PC-9 (cell line): ENCODE measurements at regions of chr7 and their contacts with region 1.

Region 1: GRCh38 chr7:130010689-130011412 is 40.3 kb downstream of the ZC3HC1 start:
- DNase-seq: peak; percentile 83 to 94
- H3K4me3 ChIP-seq: peak overlapping the region; percentile 29; the same call in 1 of the 2 replicates
- H3K27ac ChIP-seq: peak overlapping the region; percentile 99
- H3K4me1 ChIP-seq: peaks cover 26% of the 10 kb centered on the region
- H3K27me3 ChIP-seq: no peaks in the 10 kb centered on the region
- CTCF ChIP-seq: peak; percentile 97

Region 2: GRCh38 chr7:129468087-129468486 is 542.8 kb before region 1 on chr7:
- CTCF ChIA-PET with region 1: no interaction called
- POLR2A ChIA-PET with region 1: no interaction called
- intact Hi-C with region 1: loop called (anchors 2 kb)
- DNase-seq: peak in 1 of 2 experiments; percentile 92
- H3K4me3 ChIP-seq: no peak overlapping the region
- H3K27ac ChIP-seq: peak overlapping the region; percentile 80
- H3K4me1 ChIP-seq: peaks cover 45% of the 10 kb centered on the region
- H3K27me3 ChIP-seq: no peaks in the 10 kb centered on the region
- CTCF ChIP-seq: no peak

Region 3: DNA sequence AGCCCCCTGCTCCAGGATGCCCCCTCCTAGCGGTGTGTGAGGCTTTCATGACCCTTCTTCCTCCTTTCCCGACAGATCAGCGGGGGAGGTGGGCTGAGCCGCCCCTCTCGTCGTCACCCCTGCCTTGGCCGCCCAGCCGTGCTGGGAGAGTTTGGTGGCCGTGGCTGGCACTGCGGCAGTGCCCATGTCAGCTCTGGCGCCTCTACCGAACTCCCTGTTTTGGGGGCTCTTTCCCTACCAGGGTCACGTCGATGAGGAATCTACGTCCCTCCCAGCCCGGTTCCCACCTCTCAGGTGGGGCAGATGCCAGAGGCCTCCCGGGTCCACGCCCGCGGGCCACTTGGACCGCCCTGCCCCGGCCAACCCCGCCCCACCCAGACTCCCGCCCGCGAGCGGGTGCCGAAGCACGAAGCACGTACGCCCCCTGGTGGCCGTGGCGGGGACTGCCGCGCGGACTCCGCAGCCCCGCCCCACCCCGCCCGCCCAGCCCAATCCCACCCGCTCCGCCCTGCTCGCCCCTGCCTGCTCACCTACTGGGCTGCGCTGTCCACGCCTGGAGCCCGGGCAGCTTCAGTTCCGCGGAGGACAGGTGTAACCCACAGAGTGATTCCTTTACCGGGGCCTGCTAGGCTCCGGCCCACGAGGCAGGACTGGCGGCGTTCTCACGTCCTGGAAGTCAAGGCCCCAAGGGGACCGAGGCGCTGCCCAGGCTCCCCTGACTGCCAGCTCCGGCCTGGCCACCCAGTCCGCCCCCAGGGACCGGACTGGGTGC is 185.2 kb before region 1 on chr7:
- CTCF ChIA-PET with region 1: interaction called, 8 read pairs
- POLR2A ChIA-PET with region 1: interaction called, 7 read pairs
- intact Hi-C with region 1: loop called (anchors 1 kb)
- DNase-seq: peak; percentile 70 to 95
- H3K4me3 ChIP-seq: peak overlapping the region; percentile 88
- H3K27ac ChIP-seq: peak overlapping the region; percentile 91
- H3K4me1 ChIP-seq: peaks cover 23% of the 10 kb centered on the region
- H3K27me3 ChIP-seq: no peaks in the 10 kb centered on the region
- CTCF ChIP-seq: peak; percentile 70

Region 4: DNA sequence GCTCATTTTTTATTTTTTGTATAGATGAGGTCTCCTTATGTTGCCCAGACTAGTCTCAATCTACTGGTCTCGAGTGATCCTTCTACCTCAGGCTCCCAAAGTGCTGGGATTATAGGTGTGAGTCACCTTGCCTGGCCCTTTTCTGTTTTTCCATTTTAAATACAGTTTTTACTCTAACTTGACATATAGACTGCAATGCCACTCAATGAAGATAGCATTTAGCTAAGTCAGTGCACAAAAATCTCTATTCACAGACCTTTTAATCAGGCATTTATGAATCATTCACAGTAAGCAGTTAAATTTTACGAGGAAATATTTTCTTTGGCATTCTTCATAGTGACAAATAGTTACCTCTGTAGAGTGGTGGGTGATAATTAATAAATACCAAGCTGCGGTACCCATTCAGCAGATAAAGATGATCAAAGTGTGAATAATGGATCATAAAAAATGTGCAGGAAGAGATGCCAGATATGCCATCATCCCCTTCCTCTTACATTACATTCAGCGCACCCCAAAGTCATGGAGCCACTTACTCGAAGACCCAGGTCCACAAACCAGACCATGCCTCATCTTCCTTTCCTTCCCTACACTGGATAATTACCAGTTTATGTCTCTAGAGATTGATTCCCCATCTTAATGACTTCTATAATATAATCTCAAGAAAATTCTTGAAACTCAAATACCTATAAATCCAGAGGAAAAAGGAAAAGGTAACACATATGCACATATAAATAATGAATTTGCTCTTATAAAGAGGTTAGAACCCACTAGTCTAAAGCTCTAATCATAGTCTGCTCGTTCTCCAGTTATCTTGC is 114.1 kb before region 1 on chr7:
- CTCF ChIA-PET with region 1: no interaction called
- POLR2A ChIA-PET with region 1: no interaction called
- intact Hi-C with region 1: no loop called
- DNase-seq: peak in 1 of 2 experiments; percentile 74
- H3K4me3 ChIP-seq: no peak overlapping the region
- H3K27ac ChIP-seq: peak overlapping the region; percentile 25; the same call in 1 of the 2 replicates
- H3K4me1 ChIP-seq: 0 out of 2 replicates have a peak, but pooled peaks cover 6% of the 10 kb centered on the region
- H3K27me3 ChIP-seq: no peaks in the 10 kb centered on the region
- CTCF ChIP-seq: no peak

Region 5: DNA sequence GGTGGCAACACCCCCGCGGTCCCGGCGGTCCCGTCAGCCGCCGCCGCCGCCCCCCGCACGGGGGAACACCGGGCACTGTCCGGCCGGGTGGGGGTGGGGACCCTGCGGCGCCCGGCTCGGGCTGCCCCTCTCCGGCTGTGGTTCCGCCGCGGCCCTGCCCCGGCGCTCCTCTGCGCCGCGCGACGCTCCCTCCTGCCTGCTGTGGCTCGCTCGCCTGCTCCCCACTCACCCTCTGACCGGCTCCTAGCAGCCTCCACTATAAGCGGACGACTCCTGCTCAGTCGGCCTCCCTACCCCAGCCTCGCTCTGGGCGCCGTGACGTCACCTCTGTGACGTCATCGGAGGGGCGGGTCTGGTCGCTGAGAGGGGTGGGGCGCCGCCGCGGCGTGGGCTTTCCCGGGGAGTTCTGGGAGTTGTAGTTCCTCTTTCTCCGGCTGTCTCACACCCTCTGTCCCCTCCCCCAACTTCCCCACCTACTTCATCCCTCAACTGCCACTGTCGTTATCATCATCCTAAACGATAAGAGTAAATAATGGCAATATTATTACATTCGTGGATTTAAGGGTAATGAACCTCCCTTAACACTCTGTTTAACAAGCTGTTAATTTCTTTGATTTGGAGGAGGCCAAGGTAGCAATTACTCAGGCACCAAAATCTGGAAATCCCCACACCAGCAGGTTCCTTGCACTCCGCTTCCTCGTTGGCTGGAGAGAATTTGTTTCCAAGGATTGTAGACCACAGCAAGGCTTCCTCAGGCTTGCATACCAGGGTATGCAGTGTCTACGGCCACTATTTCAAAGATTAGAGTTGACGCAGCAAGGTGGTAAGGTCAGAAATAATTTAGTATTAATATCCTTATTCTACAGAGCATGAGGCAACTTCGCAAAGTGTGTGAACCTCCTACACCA is 57.9 kb before region 1 on chr7 and contains the start of gene UBE2H:
- CTCF ChIA-PET with region 1: interaction called, 14 read pairs
- POLR2A ChIA-PET with region 1: interaction called, 32 read pairs
- intact Hi-C with region 1: loop called (anchors 1 kb)
- DNase-seq: peak; percentile 68 to 89
- H3K4me3 ChIP-seq: peak within 1 kb of the TSS; percentile 76
- H3K27ac ChIP-seq: peak within 1 kb of the TSS; percentile 100
- H3K4me1 ChIP-seq: peaks cover 42% of the 10 kb centered on the region
- H3K27me3 ChIP-seq: no peaks in the 10 kb centered on the region
- CTCF ChIP-seq: no peak
- total RNA-seq, gene UBE2H: 211 TPM in 2 replicates

Region 6: DNA sequence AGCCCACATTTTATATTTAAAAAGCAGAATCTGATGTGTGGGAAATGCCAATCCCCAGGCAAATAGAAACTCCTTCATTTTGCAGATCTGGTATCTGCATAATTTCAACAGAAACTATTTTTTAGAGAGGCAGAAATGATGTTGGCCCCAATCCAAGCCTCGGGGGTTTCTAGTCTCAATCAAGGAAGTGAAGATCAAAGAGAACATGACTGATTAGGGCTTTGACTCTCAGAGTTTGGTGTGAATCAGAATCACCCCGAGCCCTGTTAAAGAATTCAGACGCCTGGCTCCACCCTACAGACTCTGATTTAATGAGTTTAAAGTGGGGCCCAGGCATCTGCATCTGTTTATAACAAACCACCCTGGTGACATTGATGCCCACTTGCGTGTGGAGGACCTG is 21.4 kb before region 1 on chr7:
- CTCF ChIA-PET with region 1: no interaction called
- POLR2A ChIA-PET with region 1: no interaction called
- intact Hi-C with region 1: loop called (anchors 1 kb)
- DNase-seq: peak; percentile 65 to 94
- H3K4me3 ChIP-seq: no peak overlapping the region
- H3K27ac ChIP-seq: peak overlapping the region; percentile 70
- H3K4me1 ChIP-seq: peaks cover 39% of the 10 kb centered on the region
- H3K27me3 ChIP-seq: no peaks in the 10 kb centered on the region
- CTCF ChIP-seq: no peak

Region 7: DNA sequence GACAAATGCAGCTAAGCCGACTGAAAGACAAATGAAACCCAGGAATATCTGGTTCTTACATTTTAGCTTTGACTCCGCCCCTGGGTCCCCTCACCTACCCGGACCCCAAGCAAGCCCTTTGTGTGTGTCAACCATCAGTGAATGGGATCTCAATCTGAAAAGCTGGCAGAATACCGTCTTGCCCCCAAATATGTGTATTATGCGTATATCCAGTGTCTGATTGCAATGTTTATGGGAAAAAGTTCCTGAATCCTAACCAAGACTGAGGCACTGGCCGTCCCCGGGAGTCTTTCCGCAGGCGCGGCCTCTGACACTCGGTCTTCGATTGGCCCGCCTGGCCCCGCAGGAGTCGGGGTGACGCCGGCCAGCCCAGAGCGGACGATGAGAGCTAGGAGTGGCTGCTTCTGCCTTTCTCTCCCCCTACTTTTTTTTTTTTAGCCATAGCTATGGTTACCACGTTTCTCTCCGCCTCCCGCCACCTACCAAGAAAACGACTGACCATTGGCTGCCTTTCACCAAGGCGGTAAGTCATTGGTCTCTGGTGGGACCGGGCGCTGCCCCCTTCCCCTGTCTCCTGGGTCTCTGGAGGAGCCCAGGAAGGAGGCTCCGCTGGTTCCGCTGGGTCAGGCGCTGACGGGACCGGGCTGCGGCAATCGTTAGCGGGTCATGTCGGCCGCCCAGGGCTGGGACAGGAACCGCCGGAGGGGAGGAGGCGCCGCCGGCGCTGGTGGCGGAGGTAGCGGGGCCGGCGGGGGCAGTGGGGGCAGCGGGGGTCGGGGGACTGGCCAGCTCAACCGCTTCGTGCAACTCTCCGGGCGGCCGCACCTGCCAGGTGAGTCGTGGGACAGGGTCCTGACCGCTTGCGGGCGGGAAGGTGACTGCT is 59.4 kb after region 1 on chr7 and contains the start of gene KLHDC10:
- CTCF ChIA-PET with region 1: no interaction called
- POLR2A ChIA-PET with region 1: no interaction called
- intact Hi-C with region 1: no loop called
- DNase-seq: peak; percentile 98
- H3K4me3 ChIP-seq: peak within 1 kb of the TSS; percentile 90
- H3K27ac ChIP-seq: peak within 1 kb of the TSS; percentile 78
- H3K4me1 ChIP-seq: peaks cover 22% of the 10 kb centered on the region
- H3K27me3 ChIP-seq: no peaks in the 10 kb centered on the region
- CTCF ChIP-seq: no peak
- total RNA-seq, gene KLHDC10: 46.4 and 47.0 TPM in 2 replicates